GM18951 (cell line): ENCODE measurements at regions of chr1 and their contacts with region 1.

Region 1: GRCh38 chr1:89994805-89995597 is at the start of gene ZNF326:
- POLR2A ChIP-seq: peak; percentile 98

Region 2: GRCh38 chr1:89632657-89633247 is 362.2 kb before region 1 on chr1 and contains the start of gene LRRC8C:
- in situ Hi-C with region 1: loop called (anchors 25 kb)
- POLR2A ChIP-seq: no peak

Region 3: DNA sequence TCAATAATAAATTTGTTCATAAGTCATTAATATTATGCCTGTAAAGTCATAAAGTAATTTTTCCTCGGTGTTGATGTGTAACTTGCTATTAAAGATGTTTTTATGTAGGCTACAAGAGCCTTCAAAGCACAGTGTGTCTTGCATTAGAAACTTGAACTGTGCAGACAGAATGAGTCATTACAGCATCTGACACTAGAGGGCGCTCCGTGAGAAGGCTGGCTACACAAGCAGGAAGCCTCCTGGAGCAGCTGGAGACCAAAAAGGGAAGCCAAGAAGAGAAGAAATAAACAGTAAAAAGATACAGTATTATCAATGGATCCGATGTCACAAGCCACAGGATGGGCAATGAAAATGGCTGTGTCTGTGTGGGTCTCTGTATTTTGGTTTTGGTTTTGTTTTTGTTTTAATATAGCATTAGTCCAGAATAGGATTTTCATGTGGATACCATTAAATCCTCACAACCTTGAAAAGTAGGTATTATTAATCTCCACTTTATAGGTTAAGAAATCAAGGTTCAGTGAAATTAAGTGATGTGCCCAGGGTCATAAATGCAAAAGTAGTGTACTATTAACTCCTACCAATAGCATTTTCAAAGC is 190.3 kb before region 1 on chr1:
- in situ Hi-C with region 1: loop called (anchors 5 kb)
- POLR2A ChIP-seq: no peak

Region 4: GRCh38 chr1:90083995-90084394 is 89.0 kb after region 1 on chr1:
- in situ Hi-C with region 1: no loop called
- POLR2A ChIP-seq: no peak

Region 5: GRCh38 chr1:90246069-90246468 is 251.1 kb after region 1 on chr1:
- in situ Hi-C with region 1: no loop called
- POLR2A ChIP-seq: no peak